ENCODE measurements at regions of chr11 and their contacts with region 1.

Region 1: DNA sequence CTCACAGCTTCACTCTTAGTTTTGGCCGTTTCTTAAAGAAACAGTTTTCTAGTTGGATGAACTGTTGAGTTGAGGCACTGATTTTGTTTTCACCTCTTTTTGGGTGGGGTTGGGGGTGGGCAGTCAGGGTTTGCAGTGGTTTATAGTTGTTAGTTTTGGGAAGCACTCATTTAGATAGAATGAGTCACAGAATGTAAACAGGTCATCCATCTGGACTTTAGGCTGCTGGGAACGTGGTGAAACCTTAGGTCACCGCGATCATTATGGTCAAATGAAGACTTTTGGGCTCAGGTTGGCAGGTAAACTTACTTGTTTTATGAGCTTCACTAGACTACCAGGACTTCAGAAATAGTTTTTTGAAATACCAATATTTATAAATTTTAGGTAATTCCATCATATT is 48.4 kb downstream of the CSTPP1 start:
- DNase-seq: peak; percentile 84
- ATAC-seq: peak; percentile 94
- H3K4me3 ChIP-seq: peak overlapping the region in 1 of 3 experiments; percentile 4; a peak in 2 of 6 replicates
- H3K27ac ChIP-seq: peak overlapping the region; percentile 56
- H3K4me1 ChIP-seq: peaks cover 32% of the 10 kb centered on the region
- H3K27me3 ChIP-seq: no peaks in the 10 kb centered on the region
- CTCF ChIP-seq: no peak
- EP300 ChIP-seq: peak in 1 of 2 experiments; percentile 56; a peak in 1 of 4 replicates
- POLR2A ChIP-seq: no peak
- RAD21 ChIP-seq: no peak

Region 2: GRCh38 chr11:46970913-46971625 is 13.9 kb before region 1 on chr11:
- CTCF ChIA-PET with region 1: no interaction called
- POLR2A ChIA-PET with region 1: no interaction called
- in situ Hi-C with region 1: no loop called
- intact Hi-C with region 1: loop called (anchors 2 kb)
- DNase-seq: no peak
- ATAC-seq: no peak
- H3K4me3 ChIP-seq: no peak overlapping the region
- H3K27ac ChIP-seq: no peak overlapping the region
- H3K4me1 ChIP-seq: peaks cover 17% of the 10 kb centered on the region
- H3K27me3 ChIP-seq: no peaks in the 10 kb centered on the region
- CTCF ChIP-seq: no peak
- EP300 ChIP-seq: no peak
- POLR2A ChIP-seq: no peak
- RAD21 ChIP-seq: no peak

Region 3: GRCh38 chr11:47000033-47000432 is 15.0 kb after region 1 on chr11:
- CTCF ChIA-PET with region 1: no interaction called
- POLR2A ChIA-PET with region 1: no interaction called
- in situ Hi-C with region 1: no loop called
- intact Hi-C with region 1: no loop called
- DNase-seq: no peak
- ATAC-seq: no peak
- H3K4me3 ChIP-seq: no peak overlapping the region
- H3K27ac ChIP-seq: no peak overlapping the region
- H3K4me1 ChIP-seq: peaks cover 12% of the 10 kb centered on the region
- H3K27me3 ChIP-seq: no peaks in the 10 kb centered on the region
- CTCF ChIP-seq: no peak
- EP300 ChIP-seq: no peak
- POLR2A ChIP-seq: no peak
- RAD21 ChIP-seq: no peak

Region 4: GRCh38 chr11:47104261-47104950 is 119.4 kb after region 1 on chr11:
- CTCF ChIA-PET with region 1: no interaction called
- POLR2A ChIA-PET with region 1: no interaction called
- in situ Hi-C with region 1: no loop called
- intact Hi-C with region 1: no loop called
- DNase-seq: no peak
- ATAC-seq: no peak
- H3K4me3 ChIP-seq: no peak overlapping the region
- H3K27ac ChIP-seq: no peak overlapping the region
- H3K4me1 ChIP-seq: peaks cover 10% of the 10 kb centered on the region
- H3K27me3 ChIP-seq: no peaks in the 10 kb centered on the region
- CTCF ChIP-seq: no peak
- EP300 ChIP-seq: no peak
- POLR2A ChIP-seq: no peak
- RAD21 ChIP-seq: no peak

Measured in HepG2 (cell line).